ENCODE measurements at regions of chr5 and their contacts with region 1.

Region 1: DNA sequence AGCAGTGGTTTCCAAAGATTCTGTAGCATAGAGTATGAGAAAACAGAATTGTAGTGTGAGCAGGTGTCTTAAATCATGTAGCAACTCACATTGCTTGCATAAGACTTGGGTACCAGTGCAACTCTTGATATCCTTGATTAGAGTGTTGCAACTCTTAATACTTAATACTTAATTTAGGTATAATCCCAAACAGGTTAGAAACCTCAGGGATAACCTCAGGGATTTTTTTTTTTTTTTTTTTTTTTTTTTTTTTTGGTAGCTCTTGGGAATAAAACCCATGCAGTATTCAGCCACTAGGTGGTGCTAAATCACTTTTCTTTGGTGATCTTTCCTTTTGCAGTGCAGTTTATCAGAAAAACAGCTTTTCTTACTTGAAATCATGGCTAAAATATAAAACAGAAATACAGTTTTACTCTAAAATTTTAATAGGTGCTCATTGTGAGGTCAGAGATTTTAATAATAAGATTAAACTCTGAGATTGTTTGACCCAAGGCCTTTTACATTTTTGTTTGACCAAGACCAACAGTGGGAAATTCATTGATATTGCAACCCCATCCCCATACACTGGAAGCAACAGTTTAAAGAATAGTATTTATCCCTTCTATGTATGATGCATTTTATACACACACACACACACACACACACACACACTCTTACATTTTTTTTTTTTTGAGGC is 55.3 kb downstream of the ERAP1 start:
- DNase-seq: peak in 1 of 10 donors; percentile 22

Region 2: GRCh38 chr5:96868603-96869371 is 116.3 kb after region 1 on chr5:
- intact Hi-C with region 1: loop called (anchors 5 kb)
- DNase-seq: no peak